SK-N-SH (cell line): ENCODE measurements at regions of chr17 and their contacts with region 1.

Region 1: DNA sequence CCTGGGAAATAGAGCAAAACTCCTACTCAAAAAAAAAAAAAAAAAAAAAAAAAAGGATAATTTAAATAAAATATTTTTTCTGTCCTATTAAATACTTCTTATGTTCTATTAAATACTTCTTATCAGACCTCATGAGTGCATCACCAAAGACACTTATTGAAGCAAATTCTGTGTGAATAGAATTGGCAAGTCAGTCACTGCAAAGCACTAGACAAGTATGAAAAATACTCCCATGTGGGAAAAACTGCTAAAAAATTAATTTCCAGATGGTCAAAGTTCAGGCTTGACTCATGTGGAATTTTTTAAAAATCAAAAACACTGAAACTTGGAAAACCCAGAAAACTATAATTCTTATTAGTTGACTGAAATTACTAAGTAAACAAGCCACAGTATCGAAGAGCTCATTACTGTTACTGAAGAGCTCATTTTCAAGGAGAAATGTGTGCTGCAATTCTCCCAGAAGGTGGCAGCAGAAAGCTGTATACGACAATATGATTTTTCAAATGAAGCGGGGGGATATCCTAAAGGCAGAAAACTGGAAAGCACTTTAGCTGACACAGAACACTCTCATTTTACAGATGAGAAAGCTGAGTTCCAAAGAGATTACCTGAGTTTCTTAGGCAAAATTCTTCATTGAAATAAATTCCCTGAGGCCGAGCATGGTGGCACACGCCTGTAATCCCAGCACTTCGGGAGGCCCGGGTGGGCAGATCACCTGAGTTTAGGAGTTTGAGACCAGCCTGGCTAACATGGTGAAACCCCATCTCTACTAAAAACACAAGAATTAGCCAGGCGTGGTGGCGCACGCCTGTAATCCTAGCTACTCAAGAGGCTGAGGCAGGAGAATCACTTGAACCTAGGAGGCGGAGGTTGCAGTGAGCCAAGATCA is 15.9 kb upstream of the FBXO47 start:
- DNase-seq: peak; percentile 75
- H3K4me3 ChIP-seq: no peak overlapping the region; a peak in 1 of 4 replicates
- H3K27ac ChIP-seq: no peak overlapping the region
- H3K4me1 ChIP-seq: peaks cover 0 to 12% of the 10 kb centered on the region in 2 experiments; a peak in 2 of 4 replicates
- H3K27me3 ChIP-seq: no peaks in the 10 kb centered on the region
- CTCF ChIP-seq: peak; percentile 91
- EP300 ChIP-seq: no peak
- RAD21 ChIP-seq: peak; percentile 94

Region 2: GRCh38 chr17:39018267-39019134 is 35.4 kb after region 1 on chr17:
- CTCF ChIA-PET with region 1: interaction called, 10 read pairs
- POLR2A ChIA-PET with region 1: no interaction called
- DNase-seq: no peak
- H3K4me3 ChIP-seq: no peak overlapping the region
- H3K27ac ChIP-seq: no peak overlapping the region
- H3K4me1 ChIP-seq: no peaks in the 10 kb centered on the region
- H3K27me3 ChIP-seq: no peaks in the 10 kb centered on the region
- CTCF ChIP-seq: no peak
- EP300 ChIP-seq: no peak
- RAD21 ChIP-seq: no peak

Region 3: GRCh38 chr17:39057701-39058206 is 74.7 kb after region 1 on chr17:
- CTCF ChIA-PET with region 1: interaction called, 11 read pairs
- POLR2A ChIA-PET with region 1: no interaction called
- DNase-seq: no peak
- H3K4me3 ChIP-seq: peak overlapping the region; percentile 63 to 81
- H3K27ac ChIP-seq: no peak overlapping the region
- H3K4me1 ChIP-seq: peaks cover 0 to 4% of the 10 kb centered on the region in 2 experiments; a peak in 2 of 4 replicates
- H3K27me3 ChIP-seq: peaks cover 1% of the 10 kb centered on the region; the same call in 1 of the 2 replicates
- CTCF ChIP-seq: no peak
- EP300 ChIP-seq: no peak
- RAD21 ChIP-seq: no peak

Region 4: GRCh38 chr17:39092692-39093230 is 109.7 kb after region 1 on chr17:
- CTCF ChIA-PET with region 1: no interaction called
- POLR2A ChIA-PET with region 1: no interaction called
- DNase-seq: no peak
- H3K4me3 ChIP-seq: no peak overlapping the region
- H3K27ac ChIP-seq: no peak overlapping the region
- H3K4me1 ChIP-seq: peaks cover 0 to 8% of the 10 kb centered on the region in 2 experiments; a peak in 1 of 4 replicates
- H3K27me3 ChIP-seq: no peaks in the 10 kb centered on the region
- CTCF ChIP-seq: no peak
- EP300 ChIP-seq: no peak
- RAD21 ChIP-seq: no peak

Region 5: DNA sequence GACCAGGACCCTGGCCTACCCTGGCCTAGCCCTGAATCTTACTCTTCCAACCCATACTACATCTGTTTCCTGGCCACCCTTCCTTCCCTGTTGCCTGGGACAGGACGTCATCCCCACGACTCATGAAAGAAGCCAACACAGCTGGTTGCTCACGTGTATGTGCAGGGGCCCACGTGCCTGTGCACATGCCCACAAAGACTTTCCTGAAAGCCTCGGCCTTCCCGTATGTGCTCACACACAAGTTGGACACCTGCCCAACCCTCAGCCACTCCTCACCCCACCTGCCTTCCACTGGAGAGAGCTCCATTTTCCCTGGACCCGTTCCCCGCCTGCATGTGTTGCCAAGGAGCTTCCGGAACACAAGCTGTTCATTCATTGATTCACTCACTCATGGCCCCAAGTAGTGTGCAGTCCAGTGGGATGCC is 161.3 kb after region 1 on chr17:
- CTCF ChIA-PET with region 1: interaction called, 174 read pairs
- POLR2A ChIA-PET with region 1: no interaction called
- DNase-seq: no peak
- H3K4me3 ChIP-seq: no peak overlapping the region
- H3K27ac ChIP-seq: no peak overlapping the region
- H3K4me1 ChIP-seq: peaks cover 0 to 19% of the 10 kb centered on the region in 2 experiments; a peak in 1 of 4 replicates
- H3K27me3 ChIP-seq: no peaks in the 10 kb centered on the region; the same call in 1 of the 2 replicates
- CTCF ChIP-seq: no peak
- EP300 ChIP-seq: no peak
- RAD21 ChIP-seq: no peak

Region 6: GRCh38 chr17:39164675-39165143 is 181.6 kb after region 1 on chr17:
- CTCF ChIA-PET with region 1: interaction called, 40 read pairs
- POLR2A ChIA-PET with region 1: no interaction called
- DNase-seq: peak; percentile 98
- H3K4me3 ChIP-seq: peak overlapping the region; percentile 50 to 62
- H3K27ac ChIP-seq: no peak overlapping the region
- H3K4me1 ChIP-seq: peaks cover 0 to 3% of the 10 kb centered on the region in 2 experiments; a peak in 2 of 4 replicates
- H3K27me3 ChIP-seq: no peaks in the 10 kb centered on the region
- CTCF ChIP-seq: peak; percentile 78
- EP300 ChIP-seq: no peak
- RAD21 ChIP-seq: peak; percentile 35; the same call in 1 of the 2 replicates

Region 7: DNA sequence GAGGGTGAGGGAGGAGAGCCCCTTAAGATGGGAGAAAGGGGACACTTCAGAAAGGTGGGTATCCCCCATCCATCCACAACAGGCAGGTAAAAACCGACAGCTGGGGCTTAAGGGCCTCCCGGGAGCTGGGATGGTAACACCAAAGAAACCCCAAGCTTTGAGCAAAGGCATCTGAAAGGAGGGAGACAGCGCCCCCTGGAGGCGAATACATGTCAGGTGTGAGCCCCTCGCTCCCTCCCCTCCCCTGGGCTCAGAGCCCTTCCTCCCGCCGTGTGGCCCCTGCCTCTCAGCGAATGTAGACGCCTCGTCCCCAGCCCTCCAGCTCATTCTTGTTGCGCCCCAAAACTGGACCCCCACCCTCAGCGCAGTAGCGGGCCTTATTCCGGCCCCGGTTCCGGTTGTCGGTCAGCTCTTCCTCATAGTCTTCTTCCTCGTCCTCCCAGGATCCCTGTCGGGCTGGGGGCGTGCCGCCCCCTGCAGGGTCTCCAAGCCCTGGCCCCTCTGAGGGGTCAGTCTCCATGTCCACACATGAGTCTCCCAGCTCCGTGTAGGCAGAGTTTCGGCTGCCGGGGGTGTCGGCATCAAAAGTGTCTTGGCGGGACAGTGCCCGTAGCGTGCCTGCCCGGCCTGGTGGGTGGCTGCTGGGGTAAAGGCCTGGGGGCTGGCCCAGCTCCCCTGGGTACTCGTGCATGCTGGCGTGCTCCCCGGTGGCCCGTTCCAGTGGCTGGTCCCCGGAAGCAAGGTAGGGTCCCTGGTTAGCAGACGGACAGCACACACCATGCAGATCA is 192.0 kb after region 1 on chr17:
- CTCF ChIA-PET with region 1: interaction called, 78 read pairs
- POLR2A ChIA-PET with region 1: no interaction called
- DNase-seq: peak; percentile 93
- H3K4me3 ChIP-seq: no peak overlapping the region
- H3K27ac ChIP-seq: no peak overlapping the region
- H3K4me1 ChIP-seq: no peaks in the 10 kb centered on the region; a peak in 1 of 4 replicates
- H3K27me3 ChIP-seq: no peaks in the 10 kb centered on the region
- CTCF ChIP-seq: peak; percentile 85
- EP300 ChIP-seq: no peak
- RAD21 ChIP-seq: peak; percentile 67